Posterior vena cava (tissue), 2 donors: ENCODE measurements at regions of chr12 and their contacts with region 1.

Region 1: GRCh38 chr12:106353178-106353577 is 4.4 kb upstream of the POLR3B start:
- DNase-seq: no peak

Region 2: DNA sequence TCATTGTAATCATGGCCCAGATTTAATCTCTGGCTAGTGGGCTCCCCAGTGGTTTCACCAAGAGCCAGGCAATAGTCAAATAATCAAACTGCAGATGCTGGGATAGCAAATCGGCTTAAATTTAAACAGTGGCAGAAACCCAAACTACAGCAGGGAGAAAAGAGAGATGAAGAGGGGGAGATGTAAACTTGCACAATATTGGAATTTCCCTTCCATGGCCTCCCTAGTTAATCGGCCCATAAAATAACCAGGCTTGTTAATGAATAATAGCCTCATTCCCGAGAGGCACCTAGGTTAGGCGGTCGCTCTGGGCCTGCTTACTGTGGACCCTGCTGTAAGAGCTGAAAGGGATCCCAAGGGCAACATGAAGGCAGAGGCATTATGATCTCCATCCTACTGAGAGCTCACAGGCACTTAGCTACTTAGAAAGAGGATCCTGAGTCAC is 330.6 kb before region 1 on chr12:
- intact Hi-C with region 1: no loop called
- DNase-seq: no peak

Region 3: GRCh38 chr12:106234449-106234848 is 118.7 kb before region 1 on chr12:
- intact Hi-C with region 1: loop called in 1 of 2 experiments (anchors 5 kb)
- DNase-seq: no peak